ENCODE measurements at regions of chr22 and their contacts with region 1.

Region 1: DNA sequence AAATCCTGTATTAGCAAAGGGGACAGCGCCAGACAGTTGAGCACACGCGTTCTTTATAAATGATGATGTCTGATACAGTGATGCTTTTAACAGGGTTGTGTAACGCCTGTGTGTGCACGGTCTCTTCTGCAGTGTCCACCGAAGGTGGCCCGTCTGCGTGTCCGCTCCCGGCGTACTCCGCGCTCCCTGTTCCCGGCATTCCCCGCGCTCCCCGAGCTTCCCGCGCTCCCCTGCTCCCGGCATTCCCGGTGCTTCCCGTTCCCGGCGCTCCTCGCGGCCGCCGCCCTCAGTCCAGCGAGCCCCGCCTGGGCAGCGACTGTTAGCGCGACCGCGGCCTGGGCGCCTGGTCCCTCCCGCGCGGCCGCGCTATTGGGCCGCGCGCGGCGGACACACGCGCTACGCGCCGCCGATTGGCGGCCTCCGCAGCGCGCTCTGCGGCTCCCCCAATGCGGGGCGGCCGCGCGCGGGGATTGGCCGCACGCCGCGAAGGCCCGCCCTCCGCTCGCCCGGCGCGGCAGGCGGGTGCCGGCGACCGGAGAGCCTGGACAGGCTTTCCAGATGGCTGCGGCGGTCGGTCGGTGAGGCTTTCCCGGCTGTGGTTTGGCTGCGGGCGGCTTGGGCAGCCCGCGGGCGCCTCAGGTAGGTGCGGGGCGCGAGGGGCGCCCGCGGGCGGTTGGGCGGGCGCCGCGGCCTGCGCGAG is at the start of gene DGCR8:
- DNase-seq: peak; percentile 78
- ATAC-seq: peak; percentile 92
- H3K4me3 Mint-ChIP-seq: peak within 1 kb of the TSS; percentile 88
- H3K27ac Mint-ChIP-seq: peak within 1 kb of the TSS; percentile 80
- H3K4me1 Mint-ChIP-seq: peaks cover 36% of the 10 kb centered on the region
- H3K27me3 Mint-ChIP-seq: no peaks in the 10 kb centered on the region
- total RNA-seq, gene DGCR8: 31.8 to 32.3 TPM

Region 2: GRCh38 chr22:19756288-19757128 is 323.4 kb before region 1 on chr22:
- CTCF ChIA-PET with region 1: no interaction called
- POLR2A ChIA-PET with region 1: no interaction called
- intact Hi-C with region 1: no loop called
- DNase-seq: peak; percentile 83
- ATAC-seq: peak; percentile 73
- H3K4me3 Mint-ChIP-seq: peak overlapping the region; percentile 32
- H3K27ac Mint-ChIP-seq: no peak overlapping the region
- H3K4me1 Mint-ChIP-seq: peaks cover 25% of the 10 kb centered on the region
- H3K27me3 Mint-ChIP-seq: peaks cover 46% of the 10 kb centered on the region

Region 3: GRCh38 chr22:20319745-20320658 is 240.1 kb after region 1 on chr22 and contains the start of gene DGCR6L:
- CTCF ChIA-PET with region 1: no interaction called
- POLR2A ChIA-PET with region 1: no interaction called
- intact Hi-C with region 1: loop called in 1 of 2 experiments (anchors 1 kb)
- DNase-seq: peak; percentile 99
- ATAC-seq: peak; percentile 53
- H3K4me3 Mint-ChIP-seq: peak within 1 kb of the TSS; percentile 85
- H3K27ac Mint-ChIP-seq: peak within 1 kb of the TSS; percentile 79
- H3K4me1 Mint-ChIP-seq: peaks cover 55% of the 10 kb centered on the region
- H3K27me3 Mint-ChIP-seq: no peaks in the 10 kb centered on the region
- total RNA-seq, gene DGCR6L: 22.4 to 24.8 TPM